Activated naive CD4-positive, alpha-beta T cell treated with anti-CD3 and anti-CD28 coated beads for 36 hours (primary cell): ENCODE measurements at regions of chr16 and their contacts with region 1.

Region 1: DNA sequence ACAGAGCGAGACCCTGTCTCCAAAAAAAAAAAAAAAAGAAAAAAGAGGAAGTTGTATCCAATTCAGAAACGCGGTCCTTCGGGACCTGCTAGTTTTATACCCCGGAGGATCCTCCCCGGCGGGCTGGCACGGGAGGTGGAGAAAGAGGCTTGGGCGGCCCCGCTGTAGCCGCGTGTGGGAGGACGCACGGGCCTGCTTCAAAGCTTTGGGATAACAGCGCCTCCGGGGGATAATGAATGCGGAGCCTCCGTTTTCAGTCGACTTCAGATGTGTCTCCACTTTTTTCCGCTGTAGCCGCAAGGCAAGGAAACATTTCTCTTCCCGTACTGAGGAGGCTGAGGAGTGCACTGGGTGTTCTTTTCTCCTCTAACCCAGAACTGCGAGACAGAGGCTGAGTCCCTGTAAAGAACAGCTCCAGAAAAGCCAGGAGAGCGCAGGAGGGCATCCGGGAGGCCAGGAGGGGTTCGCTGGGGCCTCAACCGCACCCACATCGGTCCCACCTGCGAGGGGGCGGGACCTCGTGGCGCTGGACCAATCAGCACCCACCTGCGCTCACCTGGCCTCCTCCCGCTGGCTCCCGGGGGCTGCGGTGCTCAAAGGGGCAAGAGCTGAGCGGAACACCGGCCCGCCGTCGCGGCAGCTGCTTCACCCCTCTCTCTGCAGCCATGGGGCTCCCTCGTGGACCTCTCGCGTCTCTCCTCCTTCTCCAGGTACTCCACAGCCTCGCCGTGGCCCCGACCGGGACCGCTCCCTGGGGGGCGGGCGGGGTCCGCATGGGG is at the start of gene CDH3:
- DNase-seq: peak; percentile 46
- H3K4me3 Mint-ChIP-seq: peak within 1 kb of the TSS; percentile 69
- H3K27ac Mint-ChIP-seq: no peak within 1 kb of the TSS
- H3K4me1 Mint-ChIP-seq: peaks cover 31% of the 10 kb centered on the region
- H3K27me3 Mint-ChIP-seq: peaks cover 66% of the 10 kb centered on the region
- total RNA-seq, gene CDH3: 20.1 to 23.3 TPM

Region 2: GRCh38 chr16:68658258-68659008 is 13.5 kb after region 1 on chr16:
- CTCF ChIA-PET with region 1: interaction called, 7 read pairs
- intact Hi-C with region 1: loop called (anchors 2 kb)
- DNase-seq: no peak
- H3K4me3 Mint-ChIP-seq: no peak overlapping the region
- H3K27ac Mint-ChIP-seq: no peak overlapping the region
- H3K4me1 Mint-ChIP-seq: peaks cover 13% of the 10 kb centered on the region
- H3K27me3 Mint-ChIP-seq: peaks cover 23% of the 10 kb centered on the region

Region 3: GRCh38 chr16:68668266-68668665 is 23.4 kb after region 1 on chr16:
- CTCF ChIA-PET with region 1: interaction called, 3 read pairs
- intact Hi-C with region 1: loop called (anchors 1 kb)
- DNase-seq: peak; percentile 77
- H3K4me3 Mint-ChIP-seq: no peak overlapping the region
- H3K27ac Mint-ChIP-seq: peak overlapping the region; percentile 77
- H3K4me1 Mint-ChIP-seq: peaks cover 24% of the 10 kb centered on the region
- H3K27me3 Mint-ChIP-seq: peaks cover 7% of the 10 kb centered on the region